Mammary epithelial cell (primary cell): ENCODE measurements at regions of chr9 and their contacts with region 1.

Region 1: GRCh38 chr9:33106827-33107621 is 30.6 kb upstream of the SMU1 start:
- DNase-seq: peak; percentile 71
- H3K4me3 ChIP-seq: no peak overlapping the region
- H3K27ac ChIP-seq: peak overlapping the region; percentile 68
- H3K4me1 ChIP-seq: peaks cover 25% of the 10 kb centered on the region
- H3K27me3 ChIP-seq: no peaks in the 10 kb centered on the region
- CTCF ChIP-seq: no peak

Region 2: GRCh38 chr9:33211695-33212393 is 104.8 kb after region 1 on chr9:
- CTCF ChIA-PET with region 1: no interaction called
- dilution Hi-C with region 1: no loop called
- in situ Hi-C with region 1: loop called in 1 of 2 experiments (anchors 10 kb)
- intact Hi-C with region 1: no loop called
- DNase-seq: peak; percentile 82
- H3K4me3 ChIP-seq: no peak overlapping the region
- H3K27ac ChIP-seq: no peak overlapping the region
- H3K4me1 ChIP-seq: peaks cover 14% of the 10 kb centered on the region
- H3K27me3 ChIP-seq: no peaks in the 10 kb centered on the region
- CTCF ChIP-seq: peak in 1 of 2 donors; percentile 19